ENCODE measurements at regions of chr17 and their contacts with region 1.

Region 1: GRCh38 chr17:20121359-20122253 is 112.4 kb downstream of the SPECC1 start:
- DNase-seq: no peak
- H3K4me3 ChIP-seq: no peak overlapping the region
- H3K27ac ChIP-seq: no peak overlapping the region
- H3K4me1 ChIP-seq: peaks cover 0 to 7% (median 3%) of the 10 kb centered on the region in 4 donors
- H3K27me3 ChIP-seq: no peaks in the 10 kb centered on the region
- CTCF ChIP-seq: peak; percentile 33 to 84 (median 72)
- EP300 ChIP-seq: no peak
- POLR2A ChIP-seq: no peak

Region 2: GRCh38 chr17:19867064-19867313 is 254.6 kb before region 1 on chr17:
- intact Hi-C with region 1: loop called (anchors 10 kb)
- DNase-seq: peak; percentile 86
- H3K4me3 ChIP-seq: peak overlapping the region; percentile 81 to 98 (median 92)
- H3K27ac ChIP-seq: peak overlapping the region; percentile 87 to 89 (median 89)
- H3K4me1 ChIP-seq: peaks cover 0 to 23% (median 11%) of the 10 kb centered on the region in 4 donors
- H3K27me3 ChIP-seq: no peaks in the 10 kb centered on the region
- CTCF ChIP-seq: peak in 2 of 4 experiments; percentile 30 to 33
- EP300 ChIP-seq: no peak
- POLR2A ChIP-seq: no peak

Region 3: GRCh38 chr17:19992803-19993713 is 128.5 kb before region 1 on chr17:
- intact Hi-C with region 1: loop called (anchors 1 kb)
- DNase-seq: peak; percentile 93
- H3K4me3 ChIP-seq: no peak overlapping the region
- H3K27ac ChIP-seq: no peak overlapping the region
- H3K4me1 ChIP-seq: peaks cover 0 to 5% (median 0%) of the 10 kb centered on the region in 4 donors
- H3K27me3 ChIP-seq: no peaks in the 10 kb centered on the region
- CTCF ChIP-seq: peak; percentile 48 to 66 (median 61)
- EP300 ChIP-seq: no peak
- POLR2A ChIP-seq: no peak

Region 4: DNA sequence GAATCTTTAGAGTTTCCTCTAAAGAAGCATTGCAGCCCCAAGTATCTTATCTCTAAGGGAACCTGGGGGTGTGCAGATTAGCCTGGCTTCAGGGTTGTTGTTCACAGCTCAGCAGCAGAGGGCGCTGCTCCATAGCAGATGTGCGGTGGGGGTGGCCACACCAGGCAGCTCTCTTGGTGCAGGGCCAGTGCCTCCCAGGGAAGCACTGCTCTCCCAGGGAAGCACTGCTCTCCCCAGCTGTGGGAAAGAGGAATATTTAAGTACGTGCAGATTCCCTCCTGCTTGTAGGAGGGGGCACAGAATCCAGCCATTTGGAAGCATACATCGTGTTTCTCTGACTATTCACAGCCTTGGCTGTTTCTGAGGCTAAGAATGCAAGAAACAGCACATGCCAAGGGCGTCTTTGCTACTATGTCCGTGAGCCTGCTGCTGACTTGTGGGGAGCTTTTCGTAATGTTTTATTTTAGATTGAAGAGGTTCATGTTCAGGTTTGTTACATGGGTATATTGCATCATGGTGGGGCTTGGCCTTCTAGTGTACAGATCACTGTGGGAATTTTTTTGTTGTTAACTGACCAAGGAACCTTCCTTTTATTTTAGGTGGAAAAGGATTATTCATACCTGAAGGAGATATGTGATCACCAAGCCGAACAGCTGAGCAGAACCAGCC is 105.3 kb after region 1 on chr17:
- intact Hi-C with region 1: loop called (anchors 1 kb)
- DNase-seq: peak; percentile 90
- H3K4me3 ChIP-seq: no peak overlapping the region
- H3K27ac ChIP-seq: peak overlapping the region in 1 of 4 donors; percentile 48
- H3K4me1 ChIP-seq: peaks cover 0 to 20% (median 8%) of the 10 kb centered on the region in 4 donors
- H3K27me3 ChIP-seq: no peaks in the 10 kb centered on the region
- CTCF ChIP-seq: peak; percentile 78 to 95 (median 87)
- EP300 ChIP-seq: no peak
- POLR2A ChIP-seq: no peak

Region 5: GRCh38 chr17:20281860-20282259 is 160.3 kb after region 1 on chr17:
- intact Hi-C with region 1: no loop called
- DNase-seq: no peak
- H3K4me3 ChIP-seq: no peak overlapping the region
- H3K27ac ChIP-seq: no peak overlapping the region
- H3K4me1 ChIP-seq: peaks cover 0 to 12% (median 3%) of the 10 kb centered on the region in 4 donors
- H3K27me3 ChIP-seq: no peaks in the 10 kb centered on the region
- CTCF ChIP-seq: no peak
- EP300 ChIP-seq: no peak
- POLR2A ChIP-seq: no peak

Region 6: DNA sequence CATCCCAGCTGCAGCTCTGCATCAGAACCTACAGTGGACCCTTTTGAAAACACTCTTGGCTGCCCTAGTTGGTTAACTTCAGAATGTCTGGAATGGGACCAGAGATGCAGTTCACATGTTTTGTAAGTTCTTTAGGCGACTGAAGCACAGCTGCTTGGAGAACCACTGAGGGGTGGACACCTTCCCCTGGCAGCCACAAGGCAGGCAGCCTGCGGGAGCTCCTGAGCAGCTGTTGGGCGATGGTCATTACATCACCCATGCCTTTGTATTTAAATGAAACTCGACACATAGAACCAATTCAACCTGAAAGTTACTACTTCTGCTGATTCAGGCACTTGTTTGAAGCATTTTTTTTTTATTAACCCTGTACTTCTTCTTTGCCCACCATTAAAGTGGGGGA is 194.2 kb after region 1 on chr17:
- intact Hi-C with region 1: loop called (anchors 2 kb)
- DNase-seq: no peak
- H3K4me3 ChIP-seq: no peak overlapping the region
- H3K27ac ChIP-seq: no peak overlapping the region
- H3K4me1 ChIP-seq: peaks cover 0 to 7% (median 4%) of the 10 kb centered on the region in 4 donors
- H3K27me3 ChIP-seq: no peaks in the 10 kb centered on the region
- CTCF ChIP-seq: no peak
- EP300 ChIP-seq: no peak
- POLR2A ChIP-seq: no peak